ENCODE measurements at regions of chr19 and their contacts with region 1.

Region 1: DNA sequence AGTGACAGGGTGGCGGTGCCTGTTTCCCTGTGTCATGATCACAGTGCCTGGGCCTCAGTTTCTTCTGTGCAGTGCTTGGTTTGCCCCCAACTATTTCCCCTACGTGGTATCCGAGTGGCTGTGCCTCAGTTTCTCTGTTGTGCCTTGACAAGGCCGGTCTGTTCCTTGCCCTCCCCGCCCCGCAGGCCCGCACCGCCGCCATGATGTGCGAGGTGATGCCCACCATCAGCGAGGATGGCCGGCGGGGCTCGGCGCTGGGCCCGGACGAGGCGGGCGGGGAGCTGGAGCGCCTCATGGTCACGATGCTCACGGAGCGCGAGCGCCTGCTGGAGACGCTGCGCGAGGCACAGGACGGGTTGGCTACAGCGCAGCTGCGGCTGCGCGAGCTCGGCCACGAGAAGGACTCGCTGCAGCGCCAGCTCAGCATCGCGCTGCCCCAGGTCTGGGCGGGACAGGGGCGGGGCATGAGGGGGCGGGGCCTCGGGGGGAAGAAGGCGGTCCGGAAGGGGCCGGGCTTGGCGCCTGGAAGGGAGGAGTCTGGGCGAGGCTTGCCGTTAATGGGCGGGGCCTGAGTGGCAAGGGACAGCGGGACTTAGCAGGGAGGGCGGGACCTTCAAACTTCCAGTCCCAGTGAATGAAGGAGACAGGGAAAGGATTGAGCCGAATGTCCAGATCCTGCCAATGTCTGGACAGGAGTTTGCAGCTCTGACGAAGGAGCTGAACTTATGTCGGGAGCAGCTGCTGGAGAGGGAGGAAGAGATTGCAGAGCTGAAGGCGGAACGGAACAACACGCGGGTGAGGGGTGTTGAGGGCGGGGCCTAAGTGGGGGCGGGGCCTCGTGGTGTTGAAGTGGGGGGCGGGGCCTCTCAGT is 8.6 kb downstream of the PPFIA3 start:
- DNase-seq: peak; percentile 91
- H3K4me3 Mint-ChIP-seq: peak overlapping the region; percentile 88
- H3K27ac Mint-ChIP-seq: peak overlapping the region; percentile 81
- H3K4me1 Mint-ChIP-seq: peaks cover 17% of the 10 kb centered on the region
- H3K27me3 Mint-ChIP-seq: peaks cover 6% of the 10 kb centered on the region

Region 2: GRCh38 chr19:49056010-49056901 is 71.7 kb before region 1 on chr19:
- intact Hi-C with region 1: no loop called
- DNase-seq: peak; percentile 49
- H3K4me3 Mint-ChIP-seq: peak overlapping the region; percentile 73
- H3K27ac Mint-ChIP-seq: no peak overlapping the region
- H3K4me1 Mint-ChIP-seq: peaks cover 18% of the 10 kb centered on the region
- H3K27me3 Mint-ChIP-seq: peaks cover 44% of the 10 kb centered on the region

Region 3: GRCh38 chr19:49085020-49085867 is 42.7 kb before region 1 on chr19 and contains the start of gene SNRNP70:
- intact Hi-C with region 1: loop called (anchors 1 kb)
- DNase-seq: peak; percentile 99
- H3K4me3 Mint-ChIP-seq: peak within 1 kb of the TSS; percentile 99
- H3K27ac Mint-ChIP-seq: peak within 1 kb of the TSS; percentile 80
- H3K4me1 Mint-ChIP-seq: peaks cover 25% of the 10 kb centered on the region
- H3K27me3 Mint-ChIP-seq: peaks cover 2% of the 10 kb centered on the region
- total RNA-seq, gene SNRNP70: 259 and 272 TPM in 2 replicates

Region 4: DNA sequence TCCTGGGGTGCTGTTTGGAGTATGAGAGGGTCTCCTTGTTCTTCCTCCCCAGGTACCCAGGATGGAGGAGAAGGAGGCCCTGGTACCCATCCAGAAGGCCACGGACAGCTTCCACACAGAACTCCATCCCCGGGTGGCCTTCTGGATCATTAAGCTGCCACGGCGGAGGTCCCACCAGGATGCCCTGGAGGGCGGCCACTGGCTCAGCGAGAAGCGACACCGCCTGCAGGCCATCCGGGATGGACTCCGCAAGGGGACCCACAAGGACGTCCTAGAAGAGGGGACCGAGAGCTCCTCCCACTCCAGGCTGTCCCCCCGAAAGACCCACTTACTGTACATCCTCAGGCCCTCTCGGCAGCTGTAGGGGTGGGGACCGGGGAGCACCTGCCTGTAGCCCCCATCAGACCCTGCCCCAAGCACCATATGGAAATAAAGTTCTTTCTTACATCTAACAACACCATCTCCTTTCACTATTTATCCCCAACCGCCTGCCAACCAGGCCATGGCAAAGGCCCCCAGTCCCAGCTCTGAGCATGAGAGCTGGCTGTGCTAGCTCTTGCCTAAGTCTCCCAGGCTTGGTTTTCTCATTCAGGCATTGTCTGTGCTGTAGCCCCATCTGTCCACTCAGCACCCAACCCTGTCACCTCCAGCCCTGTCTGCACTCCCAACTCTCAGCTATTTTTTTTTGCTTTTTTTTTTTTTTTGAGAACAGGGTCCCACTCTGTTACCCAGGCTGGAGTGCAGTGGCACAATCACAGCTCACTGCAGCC is 246.9 kb after region 1 on chr19:
- intact Hi-C with region 1: no loop called
- DNase-seq: no peak
- H3K4me3 Mint-ChIP-seq: no peak overlapping the region
- H3K27ac Mint-ChIP-seq: no peak overlapping the region
- H3K4me1 Mint-ChIP-seq: no peaks in the 10 kb centered on the region
- H3K27me3 Mint-ChIP-seq: peaks cover 10% of the 10 kb centered on the region